ENCODE measurements at regions of chr6 and their contacts with region 1.

Region 1: DNA sequence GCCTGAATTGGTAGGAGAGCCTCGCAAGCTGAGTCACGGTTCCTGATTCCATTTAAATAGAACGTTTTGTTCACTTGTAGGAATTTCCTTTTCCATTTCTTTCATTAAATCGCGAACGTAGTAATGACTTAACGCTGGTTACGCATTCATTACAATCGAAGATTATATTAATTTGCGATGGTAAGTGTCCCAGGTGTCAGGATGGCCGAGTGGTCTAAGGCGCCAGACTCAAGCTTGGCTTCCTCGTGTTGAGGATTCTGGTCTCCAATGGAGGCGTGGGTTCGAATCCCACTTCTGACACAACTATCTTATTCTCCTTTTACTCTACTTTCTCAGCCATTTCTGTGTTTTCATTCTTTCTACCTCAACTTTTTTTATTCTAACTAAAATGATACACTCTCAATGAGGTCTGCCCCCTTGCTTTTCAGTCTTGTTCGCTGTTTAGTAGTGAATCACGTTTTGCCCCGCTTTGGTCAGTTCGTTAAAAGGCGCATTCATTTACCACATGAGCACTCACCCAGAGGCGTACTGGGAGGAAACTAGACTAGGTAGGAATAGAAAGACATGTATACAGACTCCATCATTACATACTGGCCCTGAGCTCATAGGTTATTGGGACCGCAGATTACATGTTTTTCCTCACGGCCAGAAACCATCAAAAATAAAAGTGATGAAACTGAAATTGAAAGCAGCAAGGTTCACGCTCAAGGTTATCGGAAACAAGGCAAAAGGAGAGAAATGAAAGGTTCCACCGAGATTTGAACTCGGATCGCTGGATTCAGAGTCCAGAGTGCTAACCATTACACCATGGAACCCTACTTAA is 17.3 kb upstream of the TRIM27 start:
- DNase-seq: peak; percentile 96
- ATAC-seq: peak; percentile 69
- H3K4me3 ChIP-seq: peak overlapping the region; percentile 95
- H3K27ac ChIP-seq: peak overlapping the region; percentile 60
- H3K4me1 ChIP-seq: peaks cover 4% of the 10 kb centered on the region; the same call in 1 of the 2 replicates
- H3K27me3 ChIP-seq: no peaks in the 10 kb centered on the region
- CTCF ChIP-seq: no peak

Region 2: GRCh38 chr6:28880894-28881780 is 59.9 kb before region 1 on chr6:
- CTCF ChIA-PET with region 1: interaction called, 12 read pairs
- POLR2A ChIA-PET with region 1: no interaction called
- intact Hi-C with region 1: no loop called
- DNase-seq: peak; percentile 88
- ATAC-seq: peak; percentile 74
- H3K4me3 ChIP-seq: peak overlapping the region; percentile 81
- H3K27ac ChIP-seq: no peak overlapping the region
- H3K4me1 ChIP-seq: no peaks in the 10 kb centered on the region; the same call in 1 of the 2 replicates
- H3K27me3 ChIP-seq: no peaks in the 10 kb centered on the region
- CTCF ChIP-seq: no peak

Region 3: GRCh38 chr6:28923318-28924102 is 17.6 kb before region 1 on chr6 and contains the start of gene TRIM27:
- CTCF ChIA-PET with region 1: no interaction called
- POLR2A ChIA-PET with region 1: no interaction called
- intact Hi-C with region 1: loop called (anchors 1 kb)
- DNase-seq: peak; percentile 95
- ATAC-seq: peak; percentile 72
- H3K4me3 ChIP-seq: peak within 1 kb of the TSS; percentile 86
- H3K27ac ChIP-seq: peak within 1 kb of the TSS; percentile 82
- H3K4me1 ChIP-seq: peaks cover 23% of the 10 kb centered on the region
- H3K27me3 ChIP-seq: no peaks in the 10 kb centered on the region
- CTCF ChIP-seq: no peak
- total RNA-seq, gene TRIM27: 85.8 and 92.5 TPM in 2 replicates

Region 4: GRCh38 chr6:28981833-28982475 is 40.9 kb after region 1 on chr6:
- CTCF ChIA-PET with region 1: no interaction called
- POLR2A ChIA-PET with region 1: no interaction called
- intact Hi-C with region 1: loop called (anchors 1 kb)
- DNase-seq: peak; percentile 82
- ATAC-seq: peak; percentile 27
- H3K4me3 ChIP-seq: peak overlapping the region; percentile 92
- H3K27ac ChIP-seq: peak overlapping the region; percentile 11; the same call in 1 of the 2 replicates
- H3K4me1 ChIP-seq: peaks cover 39% of the 10 kb centered on the region
- H3K27me3 ChIP-seq: no peaks in the 10 kb centered on the region
- CTCF ChIP-seq: no peak